K562 (cell line): ENCODE measurements at regions of chr17 and their contacts with region 1.

Region 1: GRCh38 chr17:63773381-63774140 is at the start of gene CCDC47:
- DNase-seq: peak; percentile 94 to 99 (median 97)
- ATAC-seq: peak; percentile 85
- H3K4me3 ChIP-seq: peak within 1 kb of the TSS; percentile 84
- H3K27ac ChIP-seq: peak within 1 kb of the TSS; percentile 99
- H3K4me1 ChIP-seq: peaks cover 9 to 24% of the 10 kb centered on the region in 2 experiments
- H3K27me3 ChIP-seq: no peaks in the 10 kb centered on the region
- CTCF ChIP-seq: peak in 1 of 3 experiments; percentile 19; a peak in 1 of 6 replicates
- EP300 ChIP-seq: peak; percentile 23; the same call in 1 of the 2 replicates
- POLR2A ChIP-seq: peak; percentile 91
- RAD21 ChIP-seq: no peak
- polyA plus RNA-seq, gene CCDC47: 15.5 to 20.5 TPM

Region 2: DNA sequence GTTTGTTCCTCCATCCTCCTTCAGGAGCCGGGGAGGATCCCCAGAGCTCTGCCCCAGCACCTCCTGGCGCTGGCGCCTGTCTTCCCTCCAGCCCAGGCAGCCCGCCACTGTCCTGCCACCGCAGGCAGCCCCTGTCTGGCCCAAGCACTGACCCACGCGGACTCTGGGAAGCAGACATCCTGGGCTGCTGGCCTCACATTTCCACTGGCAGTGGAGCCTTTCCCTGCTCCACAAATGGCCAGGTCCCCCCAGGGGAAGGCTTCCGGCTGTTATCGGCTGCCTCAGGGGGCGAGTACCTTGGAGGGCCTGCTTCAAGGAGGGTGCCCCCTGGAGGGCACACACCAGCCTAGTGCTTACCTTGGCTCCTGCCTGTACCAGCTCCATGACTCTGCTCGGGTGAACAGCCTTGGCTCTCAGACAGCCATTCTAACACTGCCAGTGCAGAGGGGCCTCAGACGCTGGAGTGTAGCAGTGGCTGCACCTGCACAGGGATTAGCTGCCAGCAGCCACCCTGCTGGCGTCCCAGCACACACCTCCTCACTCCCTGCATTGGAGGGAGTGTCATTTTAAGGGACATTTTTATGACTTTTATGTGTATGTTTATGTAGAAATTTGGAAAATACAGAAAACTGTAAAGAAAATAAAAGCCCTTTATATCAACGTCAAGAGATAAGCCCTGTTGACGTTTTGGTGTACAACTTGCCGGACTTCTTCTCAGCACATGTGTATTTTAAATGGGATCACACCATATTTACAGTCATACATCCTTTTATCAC is 275.7 kb before region 1 on chr17:
- CTCF ChIA-PET with region 1: no interaction called
- POLR2A ChIA-PET with region 1: no interaction called
- in situ Hi-C with region 1: no loop called
- intact Hi-C with region 1: no loop called
- DNase-seq: peak in 3 of 4 experiments; percentile 30 to 47 (median 30)
- ATAC-seq: peak; percentile 71
- H3K4me3 ChIP-seq: no peak overlapping the region
- H3K27ac ChIP-seq: no peak overlapping the region
- H3K4me1 ChIP-seq: peaks cover 0 to 19% of the 10 kb centered on the region in 2 experiments; a peak in 2 of 5 replicates
- H3K27me3 ChIP-seq: peaks cover 24 to 47% of the 10 kb centered on the region in 2 experiments; a peak in 4 of 5 replicates
- CTCF ChIP-seq: peak; percentile 25 to 39 (median 34); a peak in 5 of 6 replicates
- EP300 ChIP-seq: no peak
- POLR2A ChIP-seq: no peak
- RAD21 ChIP-seq: no peak

Region 3: GRCh38 chr17:63621766-63622519 is 151.6 kb before region 1 on chr17 and contains the start of gene MAP3K3:
- CTCF ChIA-PET with region 1: no interaction called
- POLR2A ChIA-PET with region 1: interaction called, 3 read pairs
- in situ Hi-C with region 1: no loop called
- intact Hi-C with region 1: loop called (anchors 5 kb)
- DNase-seq: peak; percentile 98 to 99 (median 99)
- ATAC-seq: peak; percentile 96
- H3K4me3 ChIP-seq: peak within 1 kb of the TSS; percentile 71
- H3K27ac ChIP-seq: peak within 1 kb of the TSS; percentile 43; the same call in 2 of the 3 replicates
- H3K4me1 ChIP-seq: peaks cover 10 to 18% of the 10 kb centered on the region in 2 experiments; a peak in 4 of 5 replicates
- H3K27me3 ChIP-seq: no peaks in the 10 kb centered on the region
- CTCF ChIP-seq: peak in 2 of 3 experiments; percentile 30 to 35; a peak in 2 of 6 replicates
- EP300 ChIP-seq: no peak
- POLR2A ChIP-seq: peak; percentile 88
- RAD21 ChIP-seq: peak in 1 of 2 experiments; percentile 23; a peak in 2 of 4 replicates
- polyA plus RNA-seq, gene MAP3K3: 0.69 to 1.7 TPM

Region 4: GRCh38 chr17:63760771-63761539 is 12.6 kb before region 1 on chr17:
- CTCF ChIA-PET with region 1: no interaction called
- POLR2A ChIA-PET with region 1: interaction called, 23 read pairs
- in situ Hi-C with region 1: no loop called
- intact Hi-C with region 1: no loop called
- DNase-seq: no peak
- ATAC-seq: no peak
- H3K4me3 ChIP-seq: no peak overlapping the region
- H3K27ac ChIP-seq: no peak overlapping the region
- H3K4me1 ChIP-seq: no peaks in the 10 kb centered on the region
- H3K27me3 ChIP-seq: no peaks in the 10 kb centered on the region
- CTCF ChIP-seq: no peak
- EP300 ChIP-seq: no peak
- POLR2A ChIP-seq: no peak
- RAD21 ChIP-seq: no peak

Region 5: GRCh38 chr17:63804328-63804727 is 30.8 kb after region 1 on chr17:
- CTCF ChIA-PET with region 1: no interaction called
- POLR2A ChIA-PET with region 1: interaction called, 15 read pairs
- in situ Hi-C with region 1: no loop called
- intact Hi-C with region 1: no loop called
- DNase-seq: no peak
- ATAC-seq: no peak
- H3K4me3 ChIP-seq: no peak overlapping the region
- H3K27ac ChIP-seq: no peak overlapping the region
- H3K4me1 ChIP-seq: no peaks in the 10 kb centered on the region
- H3K27me3 ChIP-seq: no peaks in the 10 kb centered on the region
- CTCF ChIP-seq: no peak
- EP300 ChIP-seq: no peak
- POLR2A ChIP-seq: no peak
- RAD21 ChIP-seq: no peak

Region 6: GRCh38 chr17:63842540-63843386 is 69.2 kb after region 1 on chr17 and contains the start of gene SMARCD2:
- CTCF ChIA-PET with region 1: no interaction called
- POLR2A ChIA-PET with region 1: interaction called, 17 read pairs
- in situ Hi-C with region 1: no loop called
- intact Hi-C with region 1: loop called (anchors 2 kb)
- DNase-seq: peak; percentile 94 to 99 (median 96)
- ATAC-seq: peak; percentile 90
- H3K4me3 ChIP-seq: peak within 1 kb of the TSS; percentile 95
- H3K27ac ChIP-seq: peak within 1 kb of the TSS; percentile 93
- H3K4me1 ChIP-seq: peaks cover 23 to 45% of the 10 kb centered on the region in 2 experiments
- H3K27me3 ChIP-seq: no peaks in the 10 kb centered on the region
- CTCF ChIP-seq: no peak
- EP300 ChIP-seq: peak; percentile 72
- POLR2A ChIP-seq: peak; percentile 89
- RAD21 ChIP-seq: peak in 1 of 2 experiments; percentile 18; a peak in 1 of 4 replicates
- polyA plus RNA-seq, gene SMARCD2: 1.7 to 5.7 TPM